ENCODE measurements at regions of chr9 and their contacts with region 1.

Region 1: GRCh38 chr9:136694236-136694942 is 7.1 kb upstream of the AGPAT2 start:
- DNase-seq: peak; percentile 62
- H3K4me3 Mint-ChIP-seq: no peak overlapping the region
- H3K27ac Mint-ChIP-seq: peak overlapping the region; percentile 70
- H3K4me1 Mint-ChIP-seq: peaks cover 24% of the 10 kb centered on the region
- H3K27me3 Mint-ChIP-seq: no peaks in the 10 kb centered on the region
- CTCF ChIP-seq: peak; percentile 79

Region 2: GRCh38 chr9:136721339-136722092 is 27.1 kb after region 1 on chr9:
- CTCF ChIA-PET with region 1: interaction called, 5 read pairs
- POLR2A ChIA-PET with region 1: interaction called, 44 read pairs
- intact Hi-C with region 1: loop called (anchors 2 kb)
- DNase-seq: peak; percentile 84
- H3K4me3 Mint-ChIP-seq: no peak overlapping the region
- H3K27ac Mint-ChIP-seq: peak overlapping the region; percentile 82
- H3K4me1 Mint-ChIP-seq: peaks cover 20% of the 10 kb centered on the region
- H3K27me3 Mint-ChIP-seq: no peaks in the 10 kb centered on the region
- CTCF ChIP-seq: no peak

Region 3: DNA sequence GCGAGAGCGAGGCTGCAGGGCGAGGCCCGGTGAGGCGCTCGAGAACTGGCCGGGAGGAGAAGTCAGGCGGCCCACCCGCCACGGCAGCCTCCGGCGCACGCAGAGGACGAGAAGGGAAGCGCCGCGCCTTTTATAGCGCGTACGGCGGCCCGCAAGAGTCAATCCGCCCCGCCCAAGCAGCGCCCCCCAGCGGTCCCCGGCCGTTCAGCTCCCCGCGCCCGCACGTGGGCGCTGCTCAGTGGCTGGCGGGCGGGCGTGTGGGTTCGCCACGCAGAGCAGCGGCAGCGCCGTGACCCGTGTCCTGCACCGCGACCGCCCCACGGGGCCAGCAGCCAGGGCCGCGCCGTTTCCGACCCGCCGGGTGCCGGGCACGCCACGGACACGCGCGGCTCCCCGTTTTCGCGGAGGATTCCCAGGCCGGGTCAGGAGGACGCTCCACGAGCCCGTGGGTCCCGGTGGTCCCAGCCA is 33.7 kb after region 1 on chr9:
- CTCF ChIA-PET with region 1: interaction called, 5 read pairs
- POLR2A ChIA-PET with region 1: interaction called, 44 read pairs
- intact Hi-C with region 1: no loop called
- DNase-seq: peak; percentile 84
- H3K4me3 Mint-ChIP-seq: peak overlapping the region; percentile 91
- H3K27ac Mint-ChIP-seq: peak overlapping the region; percentile 16
- H3K4me1 Mint-ChIP-seq: peaks cover 18% of the 10 kb centered on the region
- H3K27me3 Mint-ChIP-seq: no peaks in the 10 kb centered on the region
- CTCF ChIP-seq: peak; percentile 95

Measured in MCF 10A (cell line).